Heart left ventricle (tissue), 16 donors: ENCODE measurements at regions of chr5 and their contacts with region 1.

Region 1: GRCh38 chr5:177958696-177959095 is 37.3 kb downstream of the PROP1 start:
- DNase-seq: no peak
- ATAC-seq: no peak
- H3K4me3 ChIP-seq: no peak overlapping the region
- H3K27ac ChIP-seq: no peak overlapping the region
- H3K4me1 ChIP-seq: no peaks in the 10 kb centered on the region
- H3K27me3 ChIP-seq: no peaks in the 10 kb centered on the region
- CTCF ChIP-seq: no peak
- POLR2A ChIP-seq: no peak

Region 2: GRCh38 chr5:177997307-177997670 is 38.6 kb after region 1 on chr5:
- intact Hi-C with region 1: loop called in 1 of 10 experiments (anchors 2 kb)
- DNase-seq: no peak
- ATAC-seq: no peak
- H3K4me3 ChIP-seq: no peak overlapping the region
- H3K27ac ChIP-seq: no peak overlapping the region
- H3K4me1 ChIP-seq: no peaks in the 10 kb centered on the region
- H3K27me3 ChIP-seq: peaks cover 0 to 30% (median 17%) of the 10 kb centered on the region in 9 donors
- CTCF ChIP-seq: no peak
- POLR2A ChIP-seq: no peak

Region 3: DNA sequence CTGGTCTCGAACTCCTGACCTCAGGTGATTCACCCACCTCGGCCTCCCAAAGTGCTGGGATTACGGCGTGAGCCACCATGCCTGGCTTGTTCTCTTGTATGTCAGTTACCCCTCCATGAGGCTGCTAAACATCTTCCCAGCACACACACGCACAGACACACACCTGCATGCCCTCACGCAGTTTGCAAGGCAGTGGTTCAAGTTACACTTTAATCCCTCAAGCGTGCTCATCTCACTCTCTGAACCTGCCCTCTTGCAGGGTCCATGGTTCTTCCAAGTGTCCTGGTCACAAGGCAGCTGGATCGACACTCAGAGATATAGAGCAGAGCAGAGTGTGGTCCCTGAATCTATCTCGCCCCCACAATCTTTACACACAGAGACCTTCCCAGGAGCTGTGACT is 1557.5 kb after region 1 on chr5:
- intact Hi-C with region 1: loop called in 2 of 10 experiments (anchors 10 kb)
- DNase-seq: no peak
- ATAC-seq: no peak
- H3K4me3 ChIP-seq: no peak overlapping the region
- H3K27ac ChIP-seq: no peak overlapping the region
- H3K4me1 ChIP-seq: no peaks in the 10 kb centered on the region
- H3K27me3 ChIP-seq: peaks cover 0 to 20% (median 0%) of the 10 kb centered on the region in 9 donors
- CTCF ChIP-seq: no peak
- POLR2A ChIP-seq: no peak